ENCODE measurements at regions of chr20 and their contacts with region 1.

Region 1: DNA sequence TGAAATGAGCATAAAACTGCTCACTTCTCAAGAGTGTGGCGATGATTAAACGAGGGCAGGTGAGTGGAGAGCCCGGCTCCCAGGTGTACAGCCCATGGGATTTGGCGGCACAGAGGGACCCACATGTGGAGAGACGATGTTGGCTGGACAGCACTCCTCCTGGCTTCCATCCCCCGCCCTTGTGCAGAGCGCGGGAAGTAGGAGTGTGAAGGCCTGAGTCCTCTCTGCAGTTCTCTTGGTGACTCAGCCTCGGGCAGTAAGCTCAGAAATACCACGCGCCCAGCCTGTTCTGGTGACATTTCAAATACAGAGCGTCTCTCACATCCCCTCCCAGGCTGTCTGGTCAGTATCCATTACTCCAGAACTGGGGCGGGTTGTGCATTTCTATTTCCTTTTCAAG is 94.2 kb upstream of the SRSF6 start:
- DNase-seq: no peak

Region 2: DNA sequence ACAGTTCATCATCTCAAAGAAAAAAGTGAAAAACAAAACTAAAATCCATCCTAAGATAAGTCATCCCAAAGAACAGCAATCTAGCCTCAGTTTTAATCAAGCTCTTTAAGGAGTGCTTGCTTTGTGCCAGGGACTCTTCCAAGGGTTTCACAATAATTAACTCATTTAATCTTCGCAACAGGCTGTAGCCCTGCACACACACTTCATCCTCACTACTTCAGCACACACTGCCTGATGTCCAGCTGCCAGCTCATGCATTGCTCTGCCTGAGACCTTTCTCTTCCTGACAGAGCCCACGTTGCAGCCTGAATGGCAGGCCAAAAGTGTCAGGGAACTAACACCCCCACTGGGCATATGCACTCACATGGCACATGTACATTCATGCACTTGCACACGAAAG is 152.6 kb before region 1 on chr20:
- intact Hi-C with region 1: no loop called
- DNase-seq: no peak

Region 3: DNA sequence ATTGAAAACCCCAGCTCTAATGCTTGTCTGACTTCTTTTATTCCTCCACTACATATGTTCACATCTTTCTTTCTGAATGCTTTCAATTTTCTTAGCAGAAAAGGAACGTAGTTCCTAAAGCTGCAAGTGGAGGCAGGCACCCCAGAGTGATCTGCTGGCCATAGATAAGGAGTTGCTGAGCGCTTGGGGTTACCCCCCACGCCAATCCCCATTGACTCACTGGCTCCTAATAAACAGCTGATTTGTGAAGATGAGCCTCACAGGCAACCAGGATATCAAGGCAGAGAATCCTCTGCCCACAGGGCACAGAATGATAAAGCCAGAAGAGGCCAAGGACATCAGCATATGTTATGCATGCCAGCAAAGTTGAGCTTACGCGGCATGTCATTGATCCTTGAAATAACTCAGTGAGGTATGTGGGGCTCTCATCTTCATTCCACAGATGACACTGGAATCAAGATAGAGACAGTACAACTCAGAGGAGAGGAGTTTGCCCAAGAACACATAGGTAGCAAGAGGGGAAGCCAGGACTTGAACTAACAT is 44.7 kb before region 1 on chr20:
- intact Hi-C with region 1: no loop called
- DNase-seq: no peak

Region 4: DNA sequence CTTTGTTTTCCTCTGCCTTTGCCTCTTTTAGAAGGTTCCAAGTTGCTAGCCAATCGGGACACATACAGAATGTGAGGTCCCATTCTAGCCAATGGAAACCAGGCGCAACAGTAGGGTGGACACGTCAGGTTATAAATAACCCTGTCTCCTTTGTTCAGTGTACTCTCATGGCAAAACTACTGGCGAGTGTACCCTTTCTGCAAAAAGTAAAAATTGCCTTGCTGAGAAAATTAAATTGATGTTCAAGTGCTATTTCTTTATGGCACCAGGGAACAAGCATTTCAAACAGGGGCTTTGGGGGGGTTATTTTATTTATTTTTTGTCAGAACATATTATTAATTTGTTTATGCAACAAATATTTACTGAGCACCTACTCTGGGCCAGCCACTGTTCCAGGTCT is 29.4 kb before region 1 on chr20:
- intact Hi-C with region 1: loop called (anchors 2 kb)
- DNase-seq: no peak

Region 5: GRCh38 chr20:43379578-43379917 is 16.0 kb after region 1 on chr20:
- intact Hi-C with region 1: no loop called
- DNase-seq: no peak